GM12878 (cell line): ENCODE measurements at regions of chr1 and their contacts with region 1.

Region 1: GRCh38 chr1:116842654-116843053 is 67.1 kb upstream of the PTGFRN start:
- DNase-seq: no peak
- ATAC-seq: no peak; the same call in 2 of the 3 replicates
- H3K4me3 ChIP-seq: no peak overlapping the region
- H3K27ac ChIP-seq: no peak overlapping the region
- H3K4me1 ChIP-seq: peaks cover 2% of the 10 kb centered on the region; the same call in 1 of the 2 replicates
- H3K27me3 ChIP-seq: no peaks in the 10 kb centered on the region
- CTCF ChIP-seq: no peak
- EP300 ChIP-seq: no peak
- POLR2A ChIP-seq: no peak
- RAD21 ChIP-seq: no peak

Region 2: DNA sequence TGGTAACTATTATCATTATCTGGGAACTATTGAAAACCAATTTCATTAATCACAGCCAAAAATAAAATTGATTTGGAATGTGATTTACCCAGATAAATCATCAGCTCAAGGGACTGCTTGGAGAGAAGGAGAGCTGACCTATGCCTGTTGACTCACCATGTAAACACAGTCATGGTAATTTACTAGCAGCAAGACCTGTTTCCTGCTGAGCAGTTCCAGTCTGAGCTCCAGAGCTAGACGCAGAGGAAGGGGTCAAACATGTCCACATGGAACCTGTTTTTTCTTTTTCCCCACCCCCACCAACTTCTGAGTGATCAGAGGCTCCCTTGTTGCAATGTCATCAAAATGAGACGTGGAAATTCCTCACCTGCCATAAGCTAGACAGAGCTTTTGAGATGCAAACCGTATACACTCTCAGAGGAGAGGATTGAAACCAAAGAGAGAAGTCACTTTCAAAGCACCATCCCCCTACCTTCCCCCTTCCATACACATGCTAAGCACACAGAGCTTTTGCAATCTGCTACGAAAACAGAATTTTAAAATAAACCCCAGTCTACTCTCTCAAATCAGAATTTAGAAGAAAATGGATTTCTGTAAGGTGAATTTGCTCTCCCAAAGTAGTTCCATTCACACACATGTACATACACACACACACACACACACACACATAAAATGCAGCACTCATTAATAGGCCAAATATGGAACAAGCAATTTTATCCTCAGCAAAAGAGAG is 11.2 kb after region 1 on chr1:
- CTCF ChIA-PET with region 1: interaction called, 5 read pairs
- POLR2A ChIA-PET with region 1: interaction called, 3 read pairs
- RAD21 ChIA-PET with region 1: interaction called, 7 read pairs
- SMC1A ChIA-PET with region 1: interaction called, 17 read pairs
- in situ Hi-C with region 1: no loop called
- intact Hi-C with region 1: no loop called
- DNase-seq: no peak
- ATAC-seq: peak; percentile 81
- H3K4me3 ChIP-seq: no peak overlapping the region
- H3K27ac ChIP-seq: no peak overlapping the region
- H3K4me1 ChIP-seq: 0 out of 2 replicates have a peak, but pooled peaks cover 3% of the 10 kb centered on the region
- H3K27me3 ChIP-seq: no peaks in the 10 kb centered on the region
- CTCF ChIP-seq: no peak
- EP300 ChIP-seq: no peak
- POLR2A ChIP-seq: no peak
- RAD21 ChIP-seq: no peak

Region 3: GRCh38 chr1:116873680-116874271 is 31.1 kb after region 1 on chr1:
- CTCF ChIA-PET with region 1: interaction called, 10 read pairs
- POLR2A ChIA-PET with region 1: interaction called, 10 read pairs
- RAD21 ChIA-PET with region 1: interaction called, 30 read pairs
- SMC1A ChIA-PET with region 1: interaction called, 57 read pairs
- in situ Hi-C with region 1: no loop called
- intact Hi-C with region 1: no loop called
- DNase-seq: no peak
- ATAC-seq: peak; percentile 11
- H3K4me3 ChIP-seq: no peak overlapping the region
- H3K27ac ChIP-seq: no peak overlapping the region
- H3K4me1 ChIP-seq: peaks cover 8% of the 10 kb centered on the region; the same call in 1 of the 2 replicates
- H3K27me3 ChIP-seq: no peaks in the 10 kb centered on the region
- CTCF ChIP-seq: no peak
- EP300 ChIP-seq: no peak
- POLR2A ChIP-seq: no peak
- RAD21 ChIP-seq: no peak